Left colon (tissue), 2 donors: ENCODE measurements at regions of chr1 and their contacts with region 1.

Region 1: DNA sequence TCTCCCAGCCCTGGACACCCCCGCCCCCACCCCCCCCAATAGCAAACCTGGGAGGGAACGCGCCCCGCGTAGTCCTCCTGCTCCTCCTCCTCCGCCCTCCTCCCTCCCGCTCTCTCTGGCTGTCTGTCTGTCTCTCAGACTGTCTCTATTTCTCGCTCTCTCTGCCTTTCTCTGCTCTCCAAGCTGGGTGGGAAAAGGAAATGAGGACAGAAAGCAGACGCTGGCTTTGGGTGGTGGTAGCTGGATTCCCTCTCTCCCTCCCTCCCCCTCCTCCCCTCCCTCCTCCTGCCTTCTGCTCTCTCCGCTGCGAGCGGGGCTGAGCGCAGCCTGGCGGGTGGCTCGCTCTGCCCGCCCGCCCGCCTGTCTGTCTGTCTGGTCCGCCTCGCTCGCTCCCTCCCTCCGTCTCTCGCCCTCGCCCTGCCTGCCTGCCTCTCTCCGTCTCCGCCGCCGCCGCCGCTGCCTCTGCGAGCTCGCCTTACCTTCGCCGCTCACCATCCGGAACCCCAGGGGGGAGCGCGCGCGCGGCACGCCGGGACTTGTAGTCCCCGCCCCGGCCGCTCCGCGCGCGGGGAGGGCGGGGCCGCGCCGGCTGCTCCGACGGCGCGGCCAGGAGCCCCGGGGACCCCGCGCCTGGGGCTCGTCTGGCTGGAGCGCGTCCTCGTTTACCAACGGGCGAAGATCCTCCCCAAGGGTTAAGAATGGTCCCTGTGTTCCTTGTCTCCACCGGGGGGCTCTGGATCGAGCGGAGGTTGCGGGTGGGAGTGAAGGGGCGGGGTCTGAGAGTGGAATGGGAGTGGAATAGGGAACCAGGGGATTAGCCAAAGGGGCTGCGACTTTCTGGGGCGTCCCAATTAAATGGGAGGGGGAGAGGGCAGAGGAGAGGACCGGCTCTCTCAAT is at the start of gene AHDC1:
- DNase-seq: peak; percentile 92 to 94
- ATAC-seq: peak; percentile 76
- total RNA-seq, gene AHDC1: 21.5 to 25.2 TPM

Region 2: DNA sequence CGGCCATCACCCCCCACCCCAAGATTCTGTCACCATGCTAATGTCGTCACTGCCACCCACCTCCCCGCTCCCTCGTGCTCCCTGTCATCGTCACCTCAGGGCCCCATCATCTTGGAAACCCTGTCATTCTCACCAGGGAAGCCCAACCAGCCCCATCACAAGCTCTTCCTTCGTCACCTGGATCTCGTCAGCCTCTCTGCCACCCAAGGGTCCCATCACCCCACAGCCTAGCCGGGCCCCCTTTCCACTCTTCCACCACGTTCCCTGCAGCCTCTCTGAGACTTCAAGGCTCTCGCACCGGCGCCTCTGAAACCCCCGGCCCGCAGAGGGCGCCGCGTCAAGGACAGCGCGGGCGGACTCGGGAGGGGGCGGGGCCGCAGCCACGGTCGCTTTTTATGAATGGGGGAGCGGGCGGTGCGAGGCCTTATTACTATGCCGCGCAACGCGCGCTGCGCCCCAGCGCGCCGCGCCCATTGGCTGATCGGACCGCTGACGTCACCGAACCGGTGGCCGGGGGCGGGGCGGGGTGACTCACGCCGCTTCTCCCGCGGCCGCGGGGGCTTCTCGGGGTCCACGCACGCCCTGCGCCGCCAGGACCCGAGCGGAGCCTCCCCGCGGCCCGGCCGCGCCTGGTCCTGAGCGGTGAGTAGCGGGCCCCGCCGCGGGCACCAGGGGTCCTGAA is 211.7 kb before region 1 on chr1 and contains the start of gene GPR3:
- intact Hi-C with region 1: loop called (anchors 5 to 10 kb)
- DNase-seq: peak; percentile 89 to 94
- ATAC-seq: peak; percentile 92
- total RNA-seq, gene GPR3: not detected

Region 3: DNA sequence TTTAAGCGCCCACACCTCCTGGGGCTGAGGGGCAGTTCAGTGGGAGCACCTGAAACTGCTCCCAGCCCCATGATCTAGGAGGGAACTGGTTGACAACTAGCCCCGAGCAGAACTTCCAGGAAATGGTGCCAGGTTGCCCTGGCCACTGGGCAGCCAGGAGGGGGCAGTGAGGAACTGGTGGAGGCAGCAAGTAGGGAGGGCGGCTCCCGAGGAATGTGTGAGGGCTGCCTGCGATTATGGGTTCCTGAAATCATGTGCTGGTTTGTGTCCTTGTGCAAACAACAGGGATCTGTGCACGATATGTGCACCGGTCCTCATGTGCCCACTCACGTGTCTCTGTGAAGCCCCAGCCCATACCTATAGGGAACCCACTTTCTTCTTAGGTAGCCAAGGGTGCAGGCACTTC is 201.6 kb before region 1 on chr1:
- intact Hi-C with region 1: loop called (anchors 5 to 10 kb)
- DNase-seq: peak; percentile 78 to 87
- ATAC-seq: peak; percentile 73

Region 4: DNA sequence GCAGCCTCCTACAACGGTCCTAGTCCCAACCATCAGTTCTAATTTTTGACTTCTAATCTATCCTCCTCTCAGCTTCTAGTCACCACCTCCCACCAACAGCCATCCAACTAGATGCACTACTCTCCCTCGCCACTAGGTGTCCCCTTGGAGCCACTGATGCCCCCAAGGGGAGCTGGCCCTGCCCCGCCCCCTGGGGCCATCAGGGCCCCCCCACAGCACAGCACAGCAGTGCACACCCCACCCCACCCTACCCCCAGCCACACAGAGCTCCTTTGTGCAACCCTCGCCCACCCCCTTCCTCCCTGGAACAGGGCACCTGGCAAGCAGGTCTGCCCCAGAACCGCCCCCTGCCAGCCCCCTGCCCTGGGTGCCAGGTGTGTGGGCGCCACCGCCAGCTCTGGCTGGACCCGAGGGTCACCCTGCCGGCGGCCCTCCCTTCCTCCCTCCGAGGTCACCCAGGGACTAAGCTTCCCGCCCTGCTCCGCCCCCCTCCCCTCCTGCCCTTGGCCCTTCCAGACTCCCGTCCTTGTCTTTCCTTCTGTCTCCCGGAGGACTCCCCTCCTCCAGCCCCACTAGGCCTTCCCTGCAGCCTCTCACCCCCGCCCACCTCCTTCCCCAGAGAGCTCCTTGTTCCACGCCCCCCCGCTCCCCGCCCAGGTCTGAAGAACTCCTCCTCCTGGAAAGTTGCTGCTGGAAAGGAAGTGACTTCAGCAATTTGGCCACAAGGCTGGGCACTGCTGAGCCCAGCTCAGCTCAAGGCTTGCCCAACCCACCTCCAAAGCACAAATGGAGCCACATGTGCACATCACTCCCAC is 46.9 kb before region 1 on chr1:
- intact Hi-C with region 1: loop called in 1 of 2 experiments (anchors 5 kb)
- DNase-seq: peak; percentile 94 to 97
- ATAC-seq: peak; percentile 72

Region 5: GRCh38 chr1:27662707-27663393 is 58.9 kb after region 1 on chr1:
- intact Hi-C with region 1: loop called (anchors 2 to 5 kb)
- DNase-seq: peak; percentile 57 to 87
- ATAC-seq: peak; percentile 62